Activated T-helper 2 cell treated with anti-CD3 and anti-CD28 coated beads, Interferon-gamma antibody, Interleukin-2, Interleukin-4, amounts not matched to agents 10 μg/mL and 5 μg/mL and 100 μg/mL, durations not matched to agents 14 hours and 24 hours and 36 hours (primary cell): ENCODE measurements at regions of chr18 and their contacts with region 1.

Region 1: GRCh38 chr18:58043491-58044379 is at the start of gene NEDD4L:
- DNase-seq: peak; percentile 66
- H3K4me3 Mint-ChIP-seq: peak within 1 kb of the TSS; percentile 90
- H3K27ac Mint-ChIP-seq: peak within 1 kb of the TSS; percentile 58
- H3K4me1 Mint-ChIP-seq: peaks cover 28% of the 10 kb centered on the region
- H3K27me3 Mint-ChIP-seq: peaks cover 49% of the 10 kb centered on the region
- total RNA-seq, gene NEDD4L: 5.1 and 6.2 TPM in 2 replicates

Region 2: DNA sequence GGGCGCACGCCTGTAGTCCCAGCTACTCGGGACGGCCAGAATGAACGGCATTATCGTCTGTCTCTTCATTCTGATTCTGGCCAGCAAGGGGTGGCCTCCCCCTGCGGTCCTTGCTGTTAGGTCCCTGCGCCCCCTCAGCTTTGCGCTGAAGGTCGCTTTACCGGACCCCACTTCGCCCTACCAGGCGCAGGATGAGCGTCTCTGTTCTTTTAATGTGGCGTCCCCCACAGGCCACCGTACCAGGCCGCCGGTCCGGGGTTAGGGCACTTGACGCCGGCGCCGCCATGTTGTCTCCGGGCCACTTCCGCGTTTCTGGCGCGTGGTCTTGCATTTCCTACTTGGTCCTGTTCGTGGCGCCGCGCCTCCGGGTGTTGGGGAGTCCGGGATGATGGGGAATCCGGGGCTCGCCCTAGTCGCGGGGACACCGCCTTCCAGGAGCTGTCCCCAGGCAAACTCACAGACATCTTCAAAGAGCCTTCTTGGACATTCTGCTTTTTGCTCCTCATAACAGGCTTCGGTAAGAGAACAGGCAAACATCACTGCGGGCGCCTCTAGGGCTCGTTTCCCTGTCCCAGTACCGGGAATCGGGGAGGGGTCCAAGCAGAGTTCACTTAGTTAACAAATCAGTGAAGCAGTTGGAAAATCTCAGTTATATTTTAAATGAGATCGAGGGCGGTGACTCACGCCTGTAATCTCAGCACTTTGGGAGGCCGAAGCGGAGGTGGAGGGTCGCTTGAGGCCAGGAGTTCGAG is 413.6 kb before region 1 on chr18:
- intact Hi-C with region 1: loop called (anchors 5 kb)
- DNase-seq: peak; percentile 91
- H3K4me3 Mint-ChIP-seq: peak overlapping the region; percentile 92
- H3K27ac Mint-ChIP-seq: peak overlapping the region; percentile 86
- H3K4me1 Mint-ChIP-seq: peaks cover 14% of the 10 kb centered on the region
- H3K27me3 Mint-ChIP-seq: no peaks in the 10 kb centered on the region

Region 3: DNA sequence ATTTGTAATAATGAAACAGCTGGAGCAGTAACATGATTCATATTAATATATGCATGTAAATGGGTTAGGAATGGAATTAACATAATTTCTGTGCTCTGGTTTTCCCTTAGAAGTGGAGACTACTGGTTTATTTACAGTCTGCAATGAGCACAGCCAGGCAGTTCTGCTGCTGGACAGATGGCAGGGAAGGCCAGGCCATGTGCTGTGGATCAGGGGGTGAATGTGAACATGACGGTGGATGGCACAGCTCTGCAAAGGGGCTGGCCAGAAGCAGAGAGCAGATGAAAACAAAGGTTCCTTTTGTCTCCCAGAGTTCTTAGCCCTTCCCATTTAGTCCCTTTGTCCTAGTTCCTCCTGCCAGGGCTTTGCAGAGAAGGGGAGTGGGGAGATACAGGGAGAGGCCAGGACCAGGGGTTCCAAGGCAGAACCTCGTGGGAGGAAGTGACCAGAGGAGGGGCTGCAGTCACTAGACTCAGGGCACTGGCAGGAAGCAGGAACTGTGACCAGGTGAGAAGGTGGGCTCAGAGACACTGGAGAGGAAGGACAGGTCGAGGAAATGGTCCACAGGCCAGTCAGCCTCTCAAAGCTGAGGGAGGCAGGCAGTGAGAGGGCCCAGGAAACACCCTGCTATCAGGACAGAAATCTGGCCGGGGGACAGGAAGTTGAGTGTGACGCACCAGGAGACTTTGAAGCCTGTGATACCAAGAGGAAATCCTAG is 127.7 kb before region 1 on chr18:
- intact Hi-C with region 1: loop called (anchors 10 kb)
- DNase-seq: peak; percentile 17
- H3K4me3 Mint-ChIP-seq: no peak overlapping the region
- H3K27ac Mint-ChIP-seq: no peak overlapping the region
- H3K4me1 Mint-ChIP-seq: peaks cover 14% of the 10 kb centered on the region
- H3K27me3 Mint-ChIP-seq: peaks cover 6% of the 10 kb centered on the region

Region 4: GRCh38 chr18:58135701-58136331 is 92.1 kb after region 1 on chr18:
- intact Hi-C with region 1: loop called (anchors 1 kb)
- DNase-seq: peak; percentile 24
- H3K4me3 Mint-ChIP-seq: no peak overlapping the region
- H3K27ac Mint-ChIP-seq: no peak overlapping the region
- H3K4me1 Mint-ChIP-seq: peaks cover 9% of the 10 kb centered on the region
- H3K27me3 Mint-ChIP-seq: peaks cover 11% of the 10 kb centered on the region

Region 5: GRCh38 chr18:58297198-58297597 is 253.5 kb after region 1 on chr18:
- intact Hi-C with region 1: loop called (anchors 5 kb)
- DNase-seq: no peak
- H3K4me3 Mint-ChIP-seq: no peak overlapping the region
- H3K27ac Mint-ChIP-seq: peak overlapping the region; percentile 10
- H3K4me1 Mint-ChIP-seq: peaks cover 15% of the 10 kb centered on the region
- H3K27me3 Mint-ChIP-seq: peaks cover 31% of the 10 kb centered on the region